Aorta (tissue), 5 donors: ENCODE measurements at regions of chr7 and their contacts with region 1.

Region 1: DNA sequence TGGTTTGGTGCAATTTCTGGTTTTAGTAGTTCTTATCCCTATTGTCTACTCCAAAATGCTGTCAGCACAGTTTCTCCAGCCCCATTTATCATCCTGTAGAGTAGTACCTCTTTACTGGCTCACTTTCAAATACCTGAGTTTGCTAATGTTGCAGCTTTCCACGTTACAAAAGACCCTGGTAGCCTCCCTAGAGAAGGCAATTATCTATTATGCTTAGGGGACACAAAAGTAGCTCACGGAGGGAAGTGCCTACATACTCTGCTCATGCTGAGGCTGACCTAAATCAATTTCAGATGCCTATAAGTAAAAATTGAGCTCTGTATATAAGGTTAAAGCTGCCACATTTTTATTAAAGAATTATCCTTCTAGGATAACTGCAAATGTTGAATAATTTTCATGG is 603.6 kb downstream of the CNTNAP2 start:
- DNase-seq: no peak
- ATAC-seq: no peak
- H3K4me3 ChIP-seq: no peak overlapping the region
- H3K27ac ChIP-seq: no peak overlapping the region
- H3K4me1 ChIP-seq: no peaks in the 10 kb centered on the region
- H3K27me3 ChIP-seq: no peaks in the 10 kb centered on the region

Region 2: GRCh38 chr7:146423446-146423845 is 296.7 kb before region 1 on chr7:
- intact Hi-C with region 1: loop called in 1 of 2 experiments (anchors 5 kb)
- DNase-seq: no peak
- ATAC-seq: no peak
- H3K4me3 ChIP-seq: no peak overlapping the region
- H3K27ac ChIP-seq: no peak overlapping the region
- H3K4me1 ChIP-seq: no peaks in the 10 kb centered on the region
- H3K27me3 ChIP-seq: no peaks in the 10 kb centered on the region